Right ventricle myocardium inferior (tissue), 1 donor: ENCODE measurements at regions of chr1 and their contacts with region 1.

Region 1: GRCh38 chr1:226940029-226940805 is at the start of gene COQ8A:
- DNase-seq: peak; percentile 100
- ATAC-seq: peak; percentile 97
- total RNA-seq, gene COQ8A: 412 TPM

Region 2: DNA sequence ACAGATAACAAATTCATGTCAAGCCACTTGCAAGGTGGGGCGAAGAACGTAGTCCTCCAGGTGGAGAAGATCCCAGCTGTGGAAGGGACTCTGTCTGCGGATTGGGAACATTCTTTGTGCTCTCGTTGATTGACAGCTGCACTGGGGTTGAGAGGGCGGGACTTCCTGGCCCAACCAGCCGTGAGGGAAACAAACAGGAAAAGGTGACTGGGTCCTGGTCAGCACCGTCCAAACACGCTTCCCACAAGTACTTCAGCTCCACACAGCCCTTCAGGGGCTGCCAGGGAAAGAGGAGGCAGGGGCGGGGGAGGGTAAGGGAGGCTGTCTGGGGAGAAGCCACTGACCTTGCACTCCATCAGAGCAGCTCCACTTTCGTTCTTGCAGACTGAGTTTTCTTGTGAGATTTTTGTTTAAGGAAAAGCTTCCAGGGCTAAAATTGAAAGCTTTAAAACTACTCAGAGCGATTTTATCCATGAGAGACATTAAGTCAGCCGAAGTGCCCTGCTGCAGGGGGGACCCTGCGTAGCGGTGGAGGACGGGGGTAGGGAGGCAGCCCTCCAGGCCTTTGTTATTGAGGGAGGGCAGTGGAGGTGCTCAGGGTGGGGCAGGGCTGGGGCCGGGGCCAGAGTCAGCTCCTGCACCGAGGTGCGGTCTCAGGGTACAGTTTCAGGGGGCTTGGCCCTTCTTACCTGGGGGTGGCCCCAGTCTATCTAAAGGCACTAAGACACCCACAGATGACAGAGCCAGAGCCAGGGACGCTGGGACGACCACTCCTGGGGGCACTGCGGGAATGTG is 413.2 kb before region 1 on chr1:
- intact Hi-C with region 1: no loop called
- DNase-seq: no peak
- ATAC-seq: peak; percentile 53

Region 3: DNA sequence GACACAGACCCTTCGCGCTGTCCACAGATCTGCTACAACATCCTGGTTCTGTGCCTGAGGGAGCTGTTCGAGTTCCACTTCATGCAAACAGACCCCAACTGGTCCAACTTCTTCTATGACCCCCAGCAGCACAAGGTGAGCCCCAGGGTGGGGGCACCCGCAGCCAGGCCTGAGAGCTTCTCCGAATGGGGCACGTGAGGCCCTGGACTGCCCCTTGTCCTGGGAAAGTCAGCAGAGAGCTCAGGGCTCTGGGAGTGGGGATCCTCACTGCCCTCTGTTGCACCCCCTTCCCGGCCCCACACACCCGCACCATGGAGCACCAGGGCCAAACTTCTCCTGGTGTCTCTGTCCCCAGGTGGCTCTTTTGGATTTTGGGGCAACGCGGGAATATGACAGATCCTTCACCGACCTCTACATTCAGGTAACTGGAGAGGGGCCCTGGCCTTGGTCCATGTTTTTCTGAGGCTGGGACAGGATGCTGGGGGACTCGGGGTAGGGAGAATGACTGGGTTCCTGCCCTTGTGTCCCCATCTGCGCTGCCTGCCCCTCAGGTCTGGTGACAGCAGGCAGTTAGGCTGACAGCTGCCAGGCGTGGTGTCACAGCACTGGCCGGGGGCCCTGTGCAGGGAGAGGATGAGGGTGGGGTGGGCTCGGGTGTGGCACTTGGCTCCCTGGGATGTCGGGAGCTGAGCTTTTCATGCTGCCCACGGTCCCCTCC is 44.5 kb after region 1 on chr1:
- intact Hi-C with region 1: loop called (anchors 2 kb)
- DNase-seq: peak; percentile 42
- ATAC-seq: peak; percentile 15

Region 4: GRCh38 chr1:227489572-227489971 is 549.4 kb after region 1 on chr1:
- intact Hi-C with region 1: no loop called
- DNase-seq: no peak
- ATAC-seq: peak; percentile 90